Endothelial cell of umbilical vein (primary cell): ENCODE measurements at regions of chr5 and their contacts with region 1.

Region 1: GRCh38 chr5:72604111-72604797 is 97.0 kb upstream of the ZNF366 start:
- DNase-seq: peak; percentile 99
- H3K4me3 ChIP-seq: no peak overlapping the region
- H3K27ac ChIP-seq: peak overlapping the region; percentile 97
- H3K4me1 ChIP-seq: peaks cover 64% of the 10 kb centered on the region
- H3K27me3 ChIP-seq: no peaks in the 10 kb centered on the region
- CTCF ChIP-seq: no peak
- POLR2A ChIP-seq: peak; percentile 25

Region 2: DNA sequence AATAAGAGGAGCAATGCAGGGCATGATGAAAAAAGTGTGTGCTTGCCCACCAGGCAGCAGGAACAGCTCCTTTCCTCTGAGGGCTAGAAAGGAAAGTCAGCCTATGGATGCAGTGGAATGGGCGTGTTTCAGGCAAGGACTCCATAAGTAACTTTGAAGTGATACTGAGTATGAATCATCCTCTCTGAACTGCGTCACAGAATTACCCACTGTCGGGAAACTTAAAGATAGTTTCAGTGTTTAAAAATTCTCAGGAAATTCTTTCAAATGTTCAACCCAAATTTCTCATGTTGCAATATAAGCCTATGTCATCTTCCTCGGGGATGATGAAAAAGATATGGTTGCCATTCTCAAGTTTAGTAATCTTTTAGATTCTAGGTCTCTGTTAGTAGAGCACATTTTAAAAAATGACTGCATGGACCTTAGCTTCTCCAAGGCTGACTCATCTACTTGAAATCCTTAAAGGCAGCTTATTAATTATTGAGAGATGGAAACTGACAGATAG is 256.4 kb before region 1 on chr5:
- CTCF ChIA-PET with region 1: no interaction called
- POLR2A ChIA-PET with region 1: no interaction called
- dilution Hi-C with region 1: no loop called
- intact Hi-C with region 1: no loop called
- DNase-seq: no peak
- H3K4me3 ChIP-seq: no peak overlapping the region
- H3K27ac ChIP-seq: no peak overlapping the region
- H3K4me1 ChIP-seq: no peaks in the 10 kb centered on the region
- H3K27me3 ChIP-seq: no peaks in the 10 kb centered on the region
- CTCF ChIP-seq: no peak
- POLR2A ChIP-seq: no peak

Region 3: DNA sequence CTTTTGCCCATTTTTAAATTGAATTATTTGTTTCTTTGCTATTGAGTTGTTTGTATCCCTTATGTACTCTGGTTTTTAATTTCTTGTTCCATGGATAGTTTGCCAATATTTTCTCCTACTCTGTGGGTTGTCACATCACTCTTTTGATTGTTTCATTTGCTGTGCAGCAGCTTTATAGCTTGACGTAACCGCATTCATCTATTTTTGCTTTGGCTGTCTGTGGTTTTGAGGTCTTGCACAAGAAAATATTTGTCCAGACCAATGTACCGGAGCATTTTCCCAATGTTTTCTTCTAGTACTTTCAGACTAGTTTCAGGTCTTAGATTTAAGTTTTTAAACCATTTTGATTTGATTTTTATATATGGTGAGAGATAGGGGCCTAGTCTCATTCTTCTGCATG is 60.9 kb before region 1 on chr5:
- CTCF ChIA-PET with region 1: no interaction called
- POLR2A ChIA-PET with region 1: no interaction called
- dilution Hi-C with region 1: no loop called
- intact Hi-C with region 1: no loop called
- DNase-seq: no peak
- H3K4me3 ChIP-seq: no peak overlapping the region
- H3K27ac ChIP-seq: no peak overlapping the region
- H3K4me1 ChIP-seq: no peaks in the 10 kb centered on the region
- H3K27me3 ChIP-seq: no peaks in the 10 kb centered on the region
- CTCF ChIP-seq: no peak
- POLR2A ChIP-seq: no peak

Region 4: GRCh38 chr5:72556351-72557166 is 47.7 kb before region 1 on chr5:
- CTCF ChIA-PET with region 1: interaction called, 34 read pairs
- POLR2A ChIA-PET with region 1: no interaction called
- dilution Hi-C with region 1: no loop called
- intact Hi-C with region 1: loop called (anchors 1 kb)
- DNase-seq: peak; percentile 85
- H3K4me3 ChIP-seq: peak overlapping the region in 1 of 3 experiments; percentile 4
- H3K27ac ChIP-seq: peak overlapping the region; percentile 97
- H3K4me1 ChIP-seq: peaks cover 83% of the 10 kb centered on the region
- H3K27me3 ChIP-seq: no peaks in the 10 kb centered on the region
- CTCF ChIP-seq: no peak
- POLR2A ChIP-seq: peak; percentile 92

Region 5: GRCh38 chr5:72871366-72872024 is 267.2 kb after region 1 on chr5:
- CTCF ChIA-PET with region 1: no interaction called
- POLR2A ChIA-PET with region 1: no interaction called
- dilution Hi-C with region 1: no loop called
- intact Hi-C with region 1: loop called (anchors 1 kb)
- DNase-seq: peak; percentile 90
- H3K4me3 ChIP-seq: peak overlapping the region in 1 of 3 experiments; percentile 9
- H3K27ac ChIP-seq: peak overlapping the region; percentile 92
- H3K4me1 ChIP-seq: peaks cover 43% of the 10 kb centered on the region
- H3K27me3 ChIP-seq: no peaks in the 10 kb centered on the region
- CTCF ChIP-seq: no peak
- POLR2A ChIP-seq: no peak